ENCODE measurements at regions of chr2 and their contacts with region 1.

Region 1: GRCh38 chr2:151409601-151410484 is at the start of gene RIF1:
- DNase-seq: peak; percentile 87 to 92
- H3K4me3 ChIP-seq: peak within 1 kb of the TSS; percentile 88 to 95
- H3K27ac ChIP-seq: peak within 1 kb of the TSS; percentile 87 to 97
- H3K4me1 ChIP-seq: peaks cover 0 to 20% (median 4%) of the 10 kb centered on the region in 4 donors
- H3K27me3 ChIP-seq: no peaks in the 10 kb centered on the region
- CTCF ChIP-seq: peak; percentile 71 to 73

Region 2: GRCh38 chr2:151261231-151261976 is 148.4 kb before region 1 on chr2 and contains the start of gene RBM43:
- intact Hi-C with region 1: loop called (anchors 10 kb)
- DNase-seq: peak; percentile 92 to 95
- H3K4me3 ChIP-seq: peak within 1 kb of the TSS; percentile 76 to 98
- H3K27ac ChIP-seq: peak within 1 kb of the TSS; percentile 92 to 97
- H3K4me1 ChIP-seq: peaks cover 0 to 32% (median 7%) of the 10 kb centered on the region in 4 donors
- H3K27me3 ChIP-seq: no peaks in the 10 kb centered on the region
- CTCF ChIP-seq: no peak

Region 3: DNA sequence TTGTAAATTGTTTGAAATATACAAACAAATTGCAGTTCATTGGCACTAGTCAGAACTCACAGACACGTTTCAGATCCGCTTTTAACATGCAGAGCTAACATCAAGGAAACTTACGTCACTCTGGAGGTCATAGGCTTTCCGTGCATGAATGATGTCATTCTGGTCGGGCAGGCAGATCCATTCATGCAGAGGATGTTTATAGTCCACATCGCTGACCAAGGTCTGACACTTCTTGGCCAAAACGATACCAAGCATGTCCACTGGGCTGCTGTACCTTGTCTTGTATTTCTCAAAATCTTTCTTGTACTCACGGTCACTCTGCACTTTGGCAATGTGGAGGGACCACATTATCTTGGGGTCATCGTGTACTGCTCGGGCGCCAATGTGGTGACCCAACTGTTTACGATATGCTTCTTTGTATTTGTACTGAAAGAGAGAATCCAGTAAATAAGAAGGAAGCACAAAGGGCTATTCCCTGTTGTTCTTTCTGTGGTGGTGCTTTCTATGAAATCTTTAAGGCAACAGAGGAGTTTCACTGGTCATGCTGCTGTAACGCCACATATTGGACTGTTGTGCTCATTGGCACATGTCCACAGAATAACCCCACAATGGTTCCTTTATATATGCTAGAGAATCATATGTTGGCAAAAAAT is 209.6 kb after region 1 on chr2:
- intact Hi-C with region 1: no loop called
- DNase-seq: no peak
- H3K4me3 ChIP-seq: no peak overlapping the region
- H3K27ac ChIP-seq: no peak overlapping the region
- H3K4me1 ChIP-seq: no peaks in the 10 kb centered on the region
- H3K27me3 ChIP-seq: no peaks in the 10 kb centered on the region
- CTCF ChIP-seq: no peak

Region 4: GRCh38 chr2:151657667-151658076 is 247.8 kb after region 1 on chr2:
- intact Hi-C with region 1: no loop called
- DNase-seq: no peak
- H3K4me3 ChIP-seq: no peak overlapping the region
- H3K27ac ChIP-seq: no peak overlapping the region
- H3K4me1 ChIP-seq: no peaks in the 10 kb centered on the region
- H3K27me3 ChIP-seq: no peaks in the 10 kb centered on the region
- CTCF ChIP-seq: no peak

Measured in tibial artery (tissue), 4 donors.